PC-9 (cell line): ENCODE measurements at regions of chr7 and their contacts with region 1.

Region 1: GRCh38 chr7:27196287-27196767 is 3.6 kb downstream of the HOXA13 start:
- DNase-seq: peak; percentile 59 to 76
- H3K4me3 ChIP-seq: no peak overlapping the region
- H3K27ac ChIP-seq: no peak overlapping the region
- H3K4me1 ChIP-seq: no peaks in the 10 kb centered on the region
- H3K27me3 ChIP-seq: peaks cover 13% of the 10 kb centered on the region; the same call in 1 of the 2 replicates
- CTCF ChIP-seq: peak; percentile 99

Region 2: DNA sequence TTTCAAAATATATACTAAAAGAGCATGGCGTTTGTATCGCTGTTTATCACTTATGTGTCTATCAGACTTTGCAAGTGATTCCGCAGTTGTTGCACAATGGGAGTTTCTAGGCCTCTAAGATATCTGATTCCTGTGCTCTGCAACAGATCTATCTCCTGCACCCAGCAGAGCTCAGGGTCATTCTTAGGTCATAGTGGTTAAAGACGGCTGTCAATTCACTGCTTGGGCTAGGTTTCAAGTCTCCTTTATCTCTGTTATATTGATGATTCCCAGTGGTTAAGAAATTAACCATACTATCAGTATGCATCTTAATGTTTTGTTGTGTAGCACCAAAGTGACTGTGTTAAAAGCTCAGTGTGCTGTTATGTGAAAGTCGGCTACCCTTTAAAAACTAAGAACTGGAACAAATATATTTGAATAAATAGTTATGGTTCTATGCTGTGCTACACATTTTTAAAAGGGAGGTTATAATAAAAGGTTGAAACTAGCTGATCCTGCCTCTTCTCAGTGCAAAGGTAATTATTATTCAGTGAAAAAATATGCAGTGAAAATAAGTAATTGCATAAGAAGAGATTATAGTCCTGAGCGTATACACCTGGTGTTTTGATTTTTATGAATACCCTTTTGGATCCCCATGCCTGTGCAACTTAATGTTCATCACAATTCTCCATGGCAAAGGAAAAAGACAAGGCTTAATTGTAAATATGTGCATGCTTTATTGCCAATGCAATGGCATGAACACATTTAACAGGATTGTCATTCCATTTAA is 124.5 kb before region 1 on chr7:
- CTCF ChIA-PET with region 1: no interaction called
- POLR2A ChIA-PET with region 1: no interaction called
- intact Hi-C with region 1: no loop called
- DNase-seq: peak; percentile 37 to 90
- H3K4me3 ChIP-seq: peak overlapping the region; percentile 6; the same call in 1 of the 2 replicates
- H3K27ac ChIP-seq: peak overlapping the region; percentile 61
- H3K4me1 ChIP-seq: peaks cover 63% of the 10 kb centered on the region
- H3K27me3 ChIP-seq: no peaks in the 10 kb centered on the region
- CTCF ChIP-seq: no peak

Region 3: GRCh38 chr7:27576360-27576944 is 380.1 kb after region 1 on chr7:
- CTCF ChIA-PET with region 1: interaction called, 3 read pairs
- POLR2A ChIA-PET with region 1: no interaction called
- intact Hi-C with region 1: loop called (anchors 1 kb)
- DNase-seq: no peak
- H3K4me3 ChIP-seq: no peak overlapping the region
- H3K27ac ChIP-seq: no peak overlapping the region
- H3K4me1 ChIP-seq: no peaks in the 10 kb centered on the region
- H3K27me3 ChIP-seq: no peaks in the 10 kb centered on the region
- CTCF ChIP-seq: peak; percentile 91

Region 4: DNA sequence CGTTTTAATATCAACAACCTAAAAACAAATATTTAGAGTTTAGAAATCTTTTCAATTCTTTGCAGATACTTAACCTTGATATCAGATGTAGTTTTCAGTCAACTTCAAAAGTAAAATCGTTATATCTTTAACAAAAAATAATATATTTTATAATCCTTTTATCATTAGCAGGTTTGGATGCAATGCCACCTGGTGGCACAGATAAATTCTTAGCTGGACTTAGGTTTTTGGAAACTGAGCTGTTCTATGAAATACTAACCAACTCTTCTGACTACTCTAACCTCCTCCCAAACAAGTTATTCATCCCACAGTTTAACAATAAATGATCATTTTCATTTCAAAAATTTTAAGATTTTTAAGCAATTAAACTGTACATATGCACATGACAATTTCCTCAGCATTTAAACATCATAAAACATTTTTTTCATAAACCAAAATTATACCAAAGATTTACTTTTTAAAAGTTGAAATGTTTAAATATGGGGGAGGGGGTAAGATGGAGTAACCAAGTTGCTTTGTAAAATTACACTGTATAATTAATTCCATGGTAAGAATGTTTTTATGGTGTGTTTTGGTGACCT is 409.5 kb after region 1 on chr7:
- CTCF ChIA-PET with region 1: interaction called, 18 read pairs
- POLR2A ChIA-PET with region 1: no interaction called
- intact Hi-C with region 1: no loop called
- DNase-seq: no peak
- H3K4me3 ChIP-seq: no peak overlapping the region
- H3K27ac ChIP-seq: peak overlapping the region; percentile 13
- H3K4me1 ChIP-seq: peaks cover 28% of the 10 kb centered on the region
- H3K27me3 ChIP-seq: no peaks in the 10 kb centered on the region
- CTCF ChIP-seq: peak; percentile 76

Region 5: GRCh38 chr7:27662490-27663205 is 466.3 kb after region 1 on chr7 and contains the start of gene HIBADH:
- CTCF ChIA-PET with region 1: no interaction called
- POLR2A ChIA-PET with region 1: no interaction called
- intact Hi-C with region 1: loop called (anchors 5 kb)
- DNase-seq: peak; percentile 99
- H3K4me3 ChIP-seq: peak within 1 kb of the TSS; percentile 79
- H3K27ac ChIP-seq: peak within 1 kb of the TSS; percentile 64
- H3K4me1 ChIP-seq: peaks cover 22% of the 10 kb centered on the region
- H3K27me3 ChIP-seq: no peaks in the 10 kb centered on the region
- CTCF ChIP-seq: no peak; the same call in 1 of the 2 replicates
- total RNA-seq, gene HIBADH: 72.4 and 73.9 TPM in 2 replicates

Region 6: GRCh38 chr7:28078036-28078901 is 881.9 kb after region 1 on chr7:
- CTCF ChIA-PET with region 1: interaction called, 4 read pairs
- POLR2A ChIA-PET with region 1: no interaction called
- intact Hi-C with region 1: loop called (anchors 5 kb)
- DNase-seq: peak in 1 of 2 experiments; percentile 47
- H3K4me3 ChIP-seq: no peak overlapping the region
- H3K27ac ChIP-seq: no peak overlapping the region
- H3K4me1 ChIP-seq: peaks cover 16% of the 10 kb centered on the region
- H3K27me3 ChIP-seq: no peaks in the 10 kb centered on the region
- CTCF ChIP-seq: peak; percentile 99

Region 7: GRCh38 chr7:28853834-28854749 is 1657.8 kb after region 1 on chr7:
- CTCF ChIA-PET with region 1: no interaction called
- POLR2A ChIA-PET with region 1: no interaction called
- intact Hi-C with region 1: loop called (anchors 10 kb)
- DNase-seq: peak; percentile 48 to 79
- H3K4me3 ChIP-seq: peak overlapping the region; percentile 53
- H3K27ac ChIP-seq: no peak overlapping the region
- H3K4me1 ChIP-seq: peaks cover 16% of the 10 kb centered on the region
- H3K27me3 ChIP-seq: no peaks in the 10 kb centered on the region
- CTCF ChIP-seq: peak; percentile 87